ENCODE measurements at regions of chr5 and their contacts with region 1.

Region 1: DNA sequence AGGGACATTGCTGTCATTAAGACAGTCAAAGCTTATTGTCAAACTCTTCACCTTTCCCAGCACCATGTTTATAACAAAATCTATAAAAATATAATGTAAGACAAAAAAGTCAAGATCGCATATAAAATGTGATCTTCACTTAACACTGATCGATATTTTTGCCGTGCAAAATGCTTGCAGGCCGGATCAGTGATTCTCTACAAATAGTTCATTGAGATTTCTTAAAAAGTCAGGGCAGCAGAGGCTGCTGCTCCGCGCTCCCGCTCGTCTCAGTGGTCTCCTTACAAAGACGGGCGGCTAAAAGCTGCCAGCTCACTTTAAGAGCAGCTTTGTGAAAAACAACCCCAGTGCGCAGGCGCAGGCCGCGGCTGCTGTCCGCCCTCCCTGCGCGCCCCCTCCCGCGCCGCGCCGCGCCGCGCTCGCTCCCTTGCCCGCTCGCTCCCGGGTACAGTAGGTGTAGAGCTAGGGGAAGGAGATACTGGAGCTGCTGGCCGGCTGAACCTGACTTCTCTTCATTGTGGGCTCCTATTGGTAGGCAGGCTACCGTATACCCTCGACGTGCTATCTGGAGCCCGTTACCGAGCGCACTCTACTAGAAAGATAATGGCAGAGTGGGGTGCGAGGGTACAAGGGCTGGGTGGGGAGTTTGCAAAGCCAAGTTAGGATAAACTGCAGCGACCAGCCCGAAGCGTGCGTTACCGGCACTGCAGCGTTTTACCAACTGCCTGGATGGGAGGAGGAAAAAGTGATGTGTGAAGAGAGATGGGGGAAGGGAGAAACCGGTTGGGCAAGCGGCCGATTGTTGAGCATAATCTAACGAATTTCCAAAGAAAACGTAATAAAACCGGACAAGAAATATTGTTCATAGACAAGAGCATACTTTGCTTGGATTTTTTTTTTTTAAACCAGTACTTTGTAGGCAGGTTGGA is at the start of gene ARRDC3:
- DNase-seq: peak; percentile 99
- ATAC-seq: peak; percentile 67
- H3K4me3 Mint-ChIP-seq: peak within 1 kb of the TSS; percentile 98
- H3K27ac Mint-ChIP-seq: peak within 1 kb of the TSS; percentile 100
- H3K4me1 Mint-ChIP-seq: peaks cover 17% of the 10 kb centered on the region
- H3K27me3 Mint-ChIP-seq: no peaks in the 10 kb centered on the region
- total RNA-seq, gene ARRDC3: 87.3 to 90.6 TPM

Region 2: GRCh38 chr5:91114658-91115057 is 268.6 kb before region 1 on chr5:
- POLR2A ChIA-PET with region 1: interaction called, 12 read pairs
- DNase-seq: no peak
- ATAC-seq: peak; percentile 42
- H3K4me3 Mint-ChIP-seq: peak overlapping the region; percentile 56
- H3K27ac Mint-ChIP-seq: peak overlapping the region; percentile 38
- H3K4me1 Mint-ChIP-seq: peaks cover 9% of the 10 kb centered on the region
- H3K27me3 Mint-ChIP-seq: peaks cover 11% of the 10 kb centered on the region

Region 3: DNA sequence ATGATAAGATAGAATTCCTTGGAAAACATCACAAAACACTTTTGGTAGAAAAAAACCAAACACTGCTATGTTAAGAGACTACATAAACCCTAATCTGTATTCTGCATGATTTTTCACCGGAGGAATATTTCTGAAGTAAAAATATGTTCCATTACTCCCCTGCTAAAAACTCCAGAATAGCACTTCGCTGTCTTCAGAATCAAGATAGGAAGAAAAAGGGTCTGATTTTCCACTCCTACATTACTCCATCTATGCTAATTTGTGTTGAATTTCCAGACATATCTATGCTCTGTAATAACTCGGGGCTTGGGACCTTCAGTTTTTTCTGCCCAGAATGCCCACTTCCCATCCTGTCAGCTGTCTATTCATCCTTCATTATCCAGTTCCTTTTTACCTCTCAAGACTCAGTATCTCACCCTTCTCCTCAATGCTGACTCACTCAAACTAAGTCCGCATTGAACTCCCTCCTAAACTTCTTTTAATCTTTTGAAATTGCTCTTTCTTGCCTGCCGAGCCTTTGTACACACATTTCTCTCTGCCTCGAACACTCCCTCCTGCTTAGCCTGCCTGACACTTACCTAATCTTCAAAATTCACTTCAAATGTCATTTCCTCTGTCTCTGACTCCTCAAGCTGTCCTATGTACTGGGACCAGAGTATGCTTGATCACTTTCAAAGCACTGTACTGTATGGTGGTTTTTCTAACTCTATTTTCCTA is 171.1 kb before region 1 on chr5:
- POLR2A ChIA-PET with region 1: no interaction called
- DNase-seq: no peak
- ATAC-seq: no peak
- H3K4me3 Mint-ChIP-seq: no peak overlapping the region
- H3K27ac Mint-ChIP-seq: no peak overlapping the region
- H3K4me1 Mint-ChIP-seq: no peaks in the 10 kb centered on the region
- H3K27me3 Mint-ChIP-seq: no peaks in the 10 kb centered on the region

Region 4: DNA sequence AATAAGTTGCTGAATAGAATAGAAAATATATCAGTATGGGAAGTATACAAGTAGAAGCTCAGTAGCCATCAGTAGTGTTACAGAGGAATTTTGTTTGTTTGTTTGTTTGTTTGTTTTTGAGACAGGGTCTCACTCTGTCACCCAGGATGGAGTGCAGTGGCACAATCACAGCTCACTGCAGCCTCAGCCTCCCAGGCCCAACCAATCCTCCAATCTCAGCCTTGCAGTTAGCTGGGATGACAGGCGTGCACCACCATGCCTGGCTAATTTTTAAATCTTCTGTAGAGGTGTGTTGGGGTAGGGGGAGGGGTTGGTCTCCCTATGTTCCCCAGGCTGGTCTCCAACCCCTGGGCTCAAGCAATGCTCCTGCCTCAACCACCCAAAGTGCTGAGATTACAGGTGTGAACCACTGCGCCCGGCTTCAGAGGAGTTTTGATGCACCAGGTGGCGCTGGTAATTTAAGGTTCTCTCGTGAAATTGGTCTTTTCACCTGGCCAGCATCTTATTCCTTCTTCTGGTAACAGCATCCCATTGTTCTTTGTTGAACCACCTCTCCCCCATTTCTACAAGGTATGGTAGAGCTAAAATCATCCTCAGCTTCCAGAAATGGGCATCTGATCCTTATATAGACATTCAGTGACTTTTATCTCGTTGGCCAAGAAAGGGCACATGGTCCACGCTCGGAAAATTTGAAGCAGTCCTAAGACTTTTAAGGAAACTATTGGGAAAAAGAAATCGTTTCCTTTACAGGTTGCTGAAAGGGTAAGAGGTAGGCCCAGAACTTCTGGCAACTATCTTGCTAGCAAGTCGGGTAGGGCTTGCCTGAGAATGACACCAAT is 157.2 kb before region 1 on chr5:
- POLR2A ChIA-PET with region 1: interaction called, 22 read pairs
- DNase-seq: peak; percentile 54
- ATAC-seq: peak; percentile 50
- H3K4me3 Mint-ChIP-seq: no peak overlapping the region
- H3K27ac Mint-ChIP-seq: no peak overlapping the region
- H3K4me1 Mint-ChIP-seq: no peaks in the 10 kb centered on the region
- H3K27me3 Mint-ChIP-seq: peaks cover 3% of the 10 kb centered on the region

Region 5: GRCh38 chr5:91280362-91281269 is 102.7 kb before region 1 on chr5:
- POLR2A ChIA-PET with region 1: interaction called, 22 read pairs
- DNase-seq: peak; percentile 86
- ATAC-seq: peak; percentile 85
- H3K4me3 Mint-ChIP-seq: peak overlapping the region; percentile 86
- H3K27ac Mint-ChIP-seq: peak overlapping the region; percentile 84
- H3K4me1 Mint-ChIP-seq: peaks cover 15% of the 10 kb centered on the region
- H3K27me3 Mint-ChIP-seq: peaks cover 7% of the 10 kb centered on the region

Region 6: GRCh38 chr5:91332267-91333045 is 50.8 kb before region 1 on chr5:
- POLR2A ChIA-PET with region 1: interaction called, 13 read pairs
- DNase-seq: no peak
- ATAC-seq: peak; percentile 85
- H3K4me3 Mint-ChIP-seq: peak overlapping the region; percentile 18
- H3K27ac Mint-ChIP-seq: peak overlapping the region; percentile 35
- H3K4me1 Mint-ChIP-seq: peaks cover 23% of the 10 kb centered on the region
- H3K27me3 Mint-ChIP-seq: no peaks in the 10 kb centered on the region

Region 7: DNA sequence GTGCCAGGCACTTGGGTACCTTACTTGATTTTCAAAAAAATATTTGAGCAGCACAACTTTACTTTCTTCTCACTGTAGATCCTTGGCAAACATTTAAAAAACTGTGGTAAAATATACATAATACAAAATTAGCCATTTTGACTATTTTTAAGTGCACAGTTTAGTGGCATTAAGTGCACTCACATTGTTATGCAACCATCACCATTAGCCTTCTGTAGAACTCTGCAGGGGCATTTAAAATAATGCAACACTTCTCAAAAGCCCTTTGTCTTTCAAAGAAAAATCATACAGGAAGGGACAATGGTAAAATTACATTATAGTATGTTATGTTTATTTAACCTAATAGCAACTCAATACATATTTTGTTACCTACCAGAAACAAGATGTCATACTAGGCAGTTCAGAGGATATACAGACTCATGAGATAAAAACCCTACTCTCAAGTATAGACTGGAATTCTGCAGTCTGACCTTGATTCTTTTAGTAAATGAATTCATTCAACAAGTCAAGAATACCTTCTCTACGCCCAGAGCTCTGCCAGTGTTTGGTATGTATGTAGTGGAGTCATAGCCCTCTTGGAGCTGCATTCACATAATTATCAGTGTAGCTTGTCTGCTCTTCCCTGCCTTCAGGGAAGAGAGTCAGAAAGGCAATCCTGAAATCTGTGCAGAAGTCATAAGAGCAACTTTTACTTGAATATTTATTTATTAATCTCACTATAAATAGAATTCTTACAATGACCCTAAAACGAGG is 73.8 kb after region 1 on chr5:
- POLR2A ChIA-PET with region 1: no interaction called
- DNase-seq: no peak
- ATAC-seq: no peak
- H3K4me3 Mint-ChIP-seq: no peak overlapping the region
- H3K27ac Mint-ChIP-seq: no peak overlapping the region
- H3K4me1 Mint-ChIP-seq: no peaks in the 10 kb centered on the region
- H3K27me3 Mint-ChIP-seq: no peaks in the 10 kb centered on the region